GM10248 (cell line): ENCODE measurements at regions of chr3 and their contacts with region 1.

Region 1: DNA sequence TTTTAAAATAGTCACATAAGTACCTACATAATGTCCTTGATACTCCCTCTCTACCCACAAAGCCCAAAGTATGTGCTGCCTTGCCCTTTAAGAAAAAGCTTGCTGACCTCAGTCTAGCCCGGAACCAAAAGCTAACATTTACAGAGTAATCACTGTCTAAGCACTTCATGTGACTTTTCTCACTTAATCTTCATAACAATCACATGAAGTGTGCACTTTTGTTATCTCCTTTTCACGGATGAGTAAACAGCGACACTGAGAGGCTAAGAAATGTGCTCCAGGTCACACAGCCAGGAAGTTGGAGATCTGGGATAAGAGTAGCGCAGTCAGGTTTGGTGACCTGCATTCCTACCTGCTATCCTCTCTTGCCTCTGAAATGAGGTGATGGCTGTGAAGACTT is 194.0 kb downstream of the ITPR1 start:
- DNase-seq: no peak
- CTCF ChIP-seq: no peak

Region 2: GRCh38 chr3:4674216-4674615 is 13.0 kb before region 1 on chr3:
- CTCF ChIA-PET with region 1: interaction called, 16 read pairs
- POLR2A ChIA-PET with region 1: no interaction called
- DNase-seq: no peak
- CTCF ChIP-seq: no peak

Region 3: DNA sequence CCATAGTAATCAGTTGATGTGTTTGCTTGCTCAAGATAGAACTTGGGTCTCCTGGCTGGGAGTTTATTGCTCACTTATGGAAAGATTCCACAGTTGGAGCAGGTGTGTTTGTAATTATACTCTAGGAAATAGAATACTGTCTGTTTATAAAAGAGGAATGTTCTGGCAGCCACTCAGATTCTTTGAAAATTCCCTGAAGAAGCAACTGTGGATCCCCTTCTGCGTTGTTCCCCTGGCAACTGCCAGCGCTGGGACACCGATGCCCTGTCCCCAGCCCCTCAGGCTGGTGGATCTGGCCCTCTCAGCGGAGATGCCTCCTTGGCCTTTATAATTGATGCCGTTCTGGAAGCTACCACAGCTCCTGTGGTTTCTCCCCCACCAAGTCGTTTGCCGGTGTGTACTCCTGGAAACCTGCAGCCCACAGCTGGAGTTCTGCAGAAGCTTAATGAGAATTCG is 31.9 kb after region 1 on chr3:
- CTCF ChIA-PET with region 1: no interaction called
- POLR2A ChIA-PET with region 1: no interaction called
- DNase-seq: no peak
- CTCF ChIP-seq: no peak

Region 4: DNA sequence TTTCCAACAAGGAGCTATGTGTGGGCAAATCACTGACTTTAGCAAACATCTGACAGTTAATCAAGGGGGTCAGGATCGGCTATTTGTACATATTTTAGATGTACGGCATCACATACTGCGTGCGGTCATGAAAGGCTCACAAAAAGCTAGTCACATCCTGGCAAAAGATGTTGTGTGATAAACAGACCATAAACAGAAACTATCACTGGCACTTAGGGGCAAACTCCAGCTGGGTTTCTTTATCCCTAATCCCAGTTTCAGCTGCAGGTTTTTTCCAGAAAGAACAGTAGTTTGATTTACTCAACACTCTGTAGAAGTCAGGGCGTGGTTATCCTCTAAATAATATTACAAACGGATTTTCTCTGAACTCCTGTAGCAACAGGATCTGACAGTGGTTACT is 179.7 kb after region 1 on chr3:
- CTCF ChIA-PET with region 1: no interaction called
- POLR2A ChIA-PET with region 1: no interaction called
- DNase-seq: no peak
- CTCF ChIP-seq: no peak